Gastrocnemius medialis (tissue), 4 donors: ENCODE measurements at regions of chr12 and their contacts with region 1.

Region 1: DNA sequence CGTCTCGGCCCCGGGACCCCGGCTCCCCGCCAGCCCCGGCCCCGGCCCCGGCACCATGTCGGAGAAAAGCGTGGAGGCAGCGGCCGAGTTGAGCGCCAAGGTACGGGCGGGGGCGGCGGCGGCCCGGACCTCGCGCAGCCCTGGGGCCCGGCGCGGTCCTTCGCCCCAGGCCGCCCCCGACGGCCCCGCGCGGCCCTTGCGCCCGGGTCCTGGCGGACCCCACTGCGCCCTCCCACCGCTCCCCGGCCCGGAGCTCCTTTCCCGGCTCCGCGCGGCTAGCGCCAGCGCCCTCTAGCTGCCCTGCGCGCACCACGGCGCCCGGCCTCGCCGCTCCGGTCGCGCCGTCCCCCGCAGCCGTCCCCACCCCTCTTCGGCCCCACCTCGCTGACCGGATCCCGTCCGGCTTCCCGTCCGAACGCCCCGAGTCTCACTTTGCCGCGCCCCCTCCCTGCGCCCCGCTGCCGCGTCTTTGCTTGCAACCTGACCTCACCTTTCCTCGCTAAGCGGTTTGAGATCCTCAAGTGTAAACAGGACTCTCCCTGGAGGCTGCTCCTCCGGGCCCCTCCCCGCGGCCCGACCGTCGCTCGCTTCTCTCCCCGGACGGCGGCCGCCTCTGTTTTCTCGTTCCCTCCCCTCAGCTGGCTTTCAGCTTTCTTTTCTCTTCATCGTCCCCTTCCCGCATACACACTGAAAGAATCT is 637 bp downstream of the PTMS start:
- DNase-seq: peak; percentile 59 to 65
- ATAC-seq: peak; percentile 69 to 73
- H3K4me3 ChIP-seq: peak overlapping the region; percentile 76 to 100 (median 88)
- H3K27ac ChIP-seq: peak overlapping the region; percentile 78 to 89 (median 84)
- H3K4me1 ChIP-seq: peaks cover 20 to 26% of the 10 kb centered on the region in 2 donors
- H3K27me3 ChIP-seq: peaks cover 0 to 9% (median 0%) of the 10 kb centered on the region in 3 donors
- CTCF ChIP-seq: peak; percentile 49 to 97 (median 81)
- POLR2A ChIP-seq: peak in 1 of 2 donors; percentile 38

Region 2: GRCh38 chr12:6662906-6663742 is 103.7 kb before region 1 on chr12 and contains the start of gene ING4:
- in situ Hi-C with region 1: no loop called
- intact Hi-C with region 1: loop called (anchors 5 kb)
- DNase-seq: peak; percentile 97 to 99
- ATAC-seq: peak; percentile 100
- H3K4me3 ChIP-seq: peak within 1 kb of the TSS; percentile 66 to 97 (median 81)
- H3K27ac ChIP-seq: peak within 1 kb of the TSS; percentile 78 to 84 (median 80)
- H3K4me1 ChIP-seq: peaks cover 12 to 18% of the 10 kb centered on the region in 2 donors
- H3K27me3 ChIP-seq: no peaks in the 10 kb centered on the region
- CTCF ChIP-seq: no peak
- POLR2A ChIP-seq: no peak
- total RNA-seq, gene ING4: 12.8 to 28.9 (median 19.7) TPM

Region 3: DNA sequence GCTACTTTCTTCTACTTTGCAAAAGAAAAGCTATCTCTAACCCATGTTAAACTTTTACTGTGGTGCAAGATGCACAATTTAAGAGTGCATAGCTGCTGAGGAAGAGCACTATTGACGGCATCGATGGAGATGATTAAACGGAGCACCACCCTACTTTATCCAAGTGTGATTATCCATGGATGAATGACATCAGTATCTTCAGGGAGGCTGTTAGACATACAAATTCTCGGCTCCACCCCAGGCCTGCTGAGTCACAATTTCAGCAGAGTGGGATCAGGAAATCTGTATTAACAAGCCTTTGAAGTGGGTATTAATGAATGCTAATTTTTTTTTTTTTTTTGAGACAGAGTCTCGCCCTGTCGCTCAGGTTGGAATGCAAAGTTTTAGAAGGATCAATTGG is 1089.7 kb after region 1 on chr12:
- in situ Hi-C with region 1: no loop called
- intact Hi-C with region 1: no loop called
- DNase-seq: no peak
- ATAC-seq: no peak
- H3K4me3 ChIP-seq: no peak overlapping the region
- H3K27ac ChIP-seq: no peak overlapping the region
- H3K4me1 ChIP-seq: no peaks in the 10 kb centered on the region
- H3K27me3 ChIP-seq: no peaks in the 10 kb centered on the region
- CTCF ChIP-seq: no peak
- POLR2A ChIP-seq: no peak